ENCODE measurements at regions of chr18 and their contacts with region 1.

Region 1: GRCh38 chr18:2173464-2173863 is 397.8 kb downstream of the METTL4 start:
- DNase-seq: no peak
- H3K4me3 ChIP-seq: no peak overlapping the region
- H3K27ac ChIP-seq: no peak overlapping the region
- H3K4me1 ChIP-seq: no peaks in the 10 kb centered on the region
- H3K27me3 ChIP-seq: no peaks in the 10 kb centered on the region
- CTCF ChIP-seq: no peak
- EP300 ChIP-seq: no peak
- POLR2A ChIP-seq: no peak

Region 2: DNA sequence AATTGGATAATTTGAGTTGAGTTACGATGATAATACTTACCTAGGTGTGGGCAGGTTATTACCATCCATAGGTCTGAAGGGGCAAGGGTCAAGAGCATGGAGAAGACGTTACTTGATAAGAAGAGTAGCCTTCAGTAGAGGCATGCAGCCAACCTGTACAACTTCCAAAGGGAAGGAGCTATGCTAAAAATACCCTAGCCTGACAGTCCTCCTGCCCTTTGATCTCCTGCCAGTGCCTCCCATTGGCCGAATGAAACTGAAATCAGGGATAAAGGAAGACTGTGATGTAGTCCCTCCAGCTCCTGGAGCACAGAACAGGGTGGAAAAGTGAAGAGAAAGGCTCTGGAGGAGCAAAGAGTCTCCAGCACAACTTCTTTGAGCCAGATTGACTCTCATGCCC is 781.4 kb before region 1 on chr18:
- in situ Hi-C with region 1: no loop called
- intact Hi-C with region 1: loop called (anchors 10 kb)
- DNase-seq: no peak
- H3K4me3 ChIP-seq: no peak overlapping the region
- H3K27ac ChIP-seq: no peak overlapping the region
- H3K4me1 ChIP-seq: no peaks in the 10 kb centered on the region
- H3K27me3 ChIP-seq: no peaks in the 10 kb centered on the region
- CTCF ChIP-seq: no peak
- EP300 ChIP-seq: no peak
- POLR2A ChIP-seq: no peak

Measured in transverse colon (tissue), 4 donors.